ENCODE measurements at regions of chr5 and their contacts with region 1.

Region 1: GRCh38 chr5:79318935-79319614 is 83.1 kb downstream of the JMY start:
- DNase-seq: peak; percentile 74
- H3K4me3 Mint-ChIP-seq: no peak overlapping the region
- H3K27ac Mint-ChIP-seq: peak overlapping the region; percentile 25
- H3K4me1 Mint-ChIP-seq: peaks cover 8% of the 10 kb centered on the region
- H3K27me3 Mint-ChIP-seq: no peaks in the 10 kb centered on the region
- CTCF ChIP-seq: no peak

Region 2: DNA sequence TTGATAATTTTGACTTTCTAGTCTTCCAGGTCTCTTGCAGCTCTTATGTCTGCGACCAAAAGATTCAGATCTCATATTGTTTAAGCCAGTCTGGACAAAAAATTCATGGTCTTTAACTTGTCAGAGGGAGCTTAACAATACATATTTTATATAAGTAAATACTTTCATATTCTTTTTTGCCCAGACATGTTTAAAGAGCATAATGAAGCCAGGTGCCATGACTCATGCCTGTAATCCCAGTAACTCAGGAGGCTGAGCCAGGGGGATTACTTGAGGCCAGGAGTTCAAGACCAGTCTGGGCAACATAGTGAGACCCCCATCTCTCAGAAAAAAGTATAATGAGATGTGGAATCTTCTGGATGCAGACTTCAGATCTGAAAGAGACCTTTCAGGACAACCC is 13.4 kb before region 1 on chr5:
- CTCF ChIA-PET with region 1: no interaction called
- POLR2A ChIA-PET with region 1: interaction called, 10 read pairs
- intact Hi-C with region 1: no loop called
- DNase-seq: peak; percentile 42
- H3K4me3 Mint-ChIP-seq: no peak overlapping the region
- H3K27ac Mint-ChIP-seq: peak overlapping the region; percentile 74
- H3K4me1 Mint-ChIP-seq: peaks cover 4% of the 10 kb centered on the region
- H3K27me3 Mint-ChIP-seq: no peaks in the 10 kb centered on the region
- CTCF ChIP-seq: no peak